ENCODE measurements at regions of chr2 and their contacts with region 1.

Region 1: GRCh38 chr2:124692707-124693106 is 667.6 kb downstream of the CNTNAP5 start:
- DNase-seq: no peak
- H3K4me3 ChIP-seq: no peak overlapping the region
- H3K27ac ChIP-seq: no peak overlapping the region
- H3K4me1 ChIP-seq: no peaks in the 10 kb centered on the region
- H3K27me3 ChIP-seq: no peaks in the 10 kb centered on the region
- CTCF ChIP-seq: no peak

Region 2: DNA sequence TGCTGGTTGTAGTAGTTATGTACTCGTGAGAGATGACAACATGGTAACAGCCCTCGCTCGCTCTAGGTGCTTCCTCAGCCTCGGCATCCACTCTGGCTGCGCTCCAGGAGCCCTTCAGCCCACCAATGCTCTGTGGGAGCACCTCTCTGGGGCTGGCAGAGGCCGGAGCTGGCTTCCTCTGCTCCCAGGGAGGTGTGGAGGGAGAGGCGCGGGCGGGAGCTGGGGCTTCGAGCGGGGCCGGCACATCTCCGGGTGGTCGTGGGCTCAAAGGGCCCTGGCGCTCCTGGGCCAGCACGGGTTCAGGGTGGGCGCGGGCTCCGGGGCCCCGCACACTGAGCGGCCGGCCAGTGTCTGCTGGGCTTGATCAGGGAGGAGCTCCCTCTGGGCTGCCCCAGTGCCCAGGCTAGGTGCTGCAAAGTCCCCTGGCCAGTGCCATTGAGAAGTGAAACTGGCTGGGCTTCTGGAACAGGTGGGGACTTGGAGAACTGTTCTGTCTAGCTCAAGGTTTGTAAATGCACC is 344.5 kb after region 1 on chr2:
- CTCF ChIA-PET with region 1: no interaction called
- POLR2A ChIA-PET with region 1: interaction called, 13 read pairs
- intact Hi-C with region 1: no loop called
- DNase-seq: no peak
- H3K4me3 ChIP-seq: no peak overlapping the region
- H3K27ac ChIP-seq: no peak overlapping the region
- H3K4me1 ChIP-seq: no peaks in the 10 kb centered on the region
- H3K27me3 ChIP-seq: no peaks in the 10 kb centered on the region
- CTCF ChIP-seq: no peak

Region 3: DNA sequence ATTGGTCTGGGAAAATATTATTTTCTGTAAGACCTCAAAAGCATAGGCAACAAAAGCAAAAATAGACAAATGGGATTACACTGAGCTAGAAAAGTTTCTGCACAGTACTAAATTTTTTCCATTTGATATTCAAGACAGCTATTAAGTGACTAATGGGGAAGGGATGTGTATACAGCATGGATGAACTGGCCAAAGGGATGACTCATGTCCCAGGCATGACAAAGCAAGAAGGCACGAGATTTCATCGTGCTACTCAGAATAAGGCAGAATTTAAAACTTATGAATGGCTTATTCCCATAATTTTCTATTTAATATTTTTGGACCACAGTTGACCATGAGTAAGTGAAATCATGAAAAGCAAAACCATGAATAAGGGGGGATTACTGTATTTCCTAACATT is 713.1 kb after region 1 on chr2:
- CTCF ChIA-PET with region 1: no interaction called
- POLR2A ChIA-PET with region 1: no interaction called
- intact Hi-C with region 1: no loop called
- DNase-seq: peak; percentile 54 to 63
- H3K4me3 ChIP-seq: no peak overlapping the region
- H3K27ac ChIP-seq: no peak overlapping the region
- H3K4me1 ChIP-seq: no peaks in the 10 kb centered on the region
- H3K27me3 ChIP-seq: no peaks in the 10 kb centered on the region
- CTCF ChIP-seq: no peak